Activated naive CD4-positive, alpha-beta T cell treated with anti-CD3 and anti-CD28 coated beads for 36 hours (primary cell): ENCODE measurements at regions of chr9 and their contacts with region 1.

Region 1: DNA sequence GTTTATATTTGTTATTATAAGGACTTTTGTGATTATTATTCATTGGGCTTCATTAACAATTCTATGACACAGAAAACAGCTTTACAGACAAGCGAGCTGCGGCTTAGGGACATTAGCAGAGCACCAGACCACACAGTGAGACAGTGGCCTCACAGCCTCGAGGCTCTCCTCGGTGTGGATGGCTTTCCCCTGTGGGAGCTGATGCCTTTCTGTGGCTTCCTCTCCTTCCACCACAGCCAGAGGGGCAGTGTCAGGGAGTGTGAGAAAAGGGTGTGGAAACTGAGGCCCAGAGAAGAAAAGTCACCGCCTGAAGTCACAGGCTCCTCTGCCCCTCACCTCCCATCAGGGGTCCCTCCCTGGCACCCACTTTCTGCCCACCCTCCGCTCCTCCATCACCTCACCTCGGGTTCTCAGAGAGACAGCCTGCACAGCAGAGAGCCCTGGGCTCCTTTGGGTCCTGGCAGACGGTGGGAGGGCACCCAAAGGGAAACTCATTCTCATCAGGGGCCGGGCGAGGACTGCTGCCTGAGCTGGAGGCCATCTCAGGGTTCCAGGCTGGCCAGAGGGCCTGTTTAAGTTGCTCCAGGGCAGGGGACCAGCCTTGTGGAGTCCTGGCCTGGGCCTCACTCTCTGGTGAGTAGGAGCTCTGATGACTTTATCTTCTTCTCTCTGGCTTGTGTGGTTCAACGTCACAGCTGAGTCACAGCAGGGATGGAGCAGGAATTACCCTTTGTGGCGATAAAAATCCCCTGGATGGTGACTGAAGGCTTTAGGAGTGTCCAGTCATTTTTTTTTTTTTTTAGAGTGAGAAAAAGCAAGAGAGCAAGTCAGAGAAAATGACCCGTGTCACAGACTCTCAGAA is 830 bp downstream of the TRAF1 start:
- DNase-seq: peak; percentile 97
- H3K4me3 Mint-ChIP-seq: peak overlapping the region; percentile 92
- H3K27ac Mint-ChIP-seq: peak overlapping the region; percentile 98
- H3K4me1 Mint-ChIP-seq: peaks cover 74% of the 10 kb centered on the region
- H3K27me3 Mint-ChIP-seq: no peaks in the 10 kb centered on the region

Region 2: DNA sequence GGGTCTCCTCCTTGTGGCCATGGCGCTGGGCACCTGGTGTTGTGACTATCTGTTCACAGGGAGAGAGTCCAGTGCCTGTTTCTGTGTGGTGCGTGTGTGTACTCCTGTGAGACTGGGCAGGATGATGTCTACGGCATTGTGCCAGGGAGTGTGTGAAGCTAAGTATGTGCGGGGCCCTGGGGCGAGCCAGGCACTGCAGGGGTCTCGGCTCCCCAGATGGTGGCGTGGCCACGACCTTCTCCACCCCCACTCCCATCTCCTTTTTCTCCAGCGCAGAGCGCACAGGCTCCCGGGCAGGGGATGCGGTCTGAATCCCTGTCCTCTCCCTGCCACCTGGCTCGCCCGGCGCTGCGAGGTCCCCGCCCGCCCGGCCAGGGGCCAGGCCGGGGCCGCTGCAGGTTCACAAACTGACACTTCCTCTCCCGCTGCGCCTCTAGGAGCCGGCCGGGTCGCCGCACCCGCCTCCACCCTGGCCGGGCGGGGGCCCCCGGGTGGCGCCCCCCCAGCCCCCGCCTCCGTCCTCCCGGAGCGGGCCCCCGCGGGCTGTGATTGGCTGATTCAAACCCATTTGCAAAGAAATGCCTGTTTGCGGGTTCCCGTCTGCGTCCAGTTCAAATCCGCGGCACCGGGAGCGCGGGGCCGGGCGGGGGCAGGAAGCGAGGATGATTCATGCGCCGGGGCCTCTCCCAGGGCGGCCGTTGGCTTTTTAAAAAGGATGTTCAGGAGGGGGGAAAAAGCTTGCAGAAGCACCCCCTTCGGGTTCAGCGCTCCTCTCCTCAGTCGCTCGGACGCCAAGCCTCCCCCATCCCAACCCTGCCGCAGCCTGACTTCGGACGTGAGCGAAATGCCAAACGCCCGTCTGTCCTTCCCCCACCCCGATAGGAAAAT is 49.6 kb before region 1 on chr9:
- CTCF ChIA-PET with region 1: interaction called, 3 read pairs
- intact Hi-C with region 1: loop called (anchors 1 kb)
- DNase-seq: peak; percentile 98
- H3K4me3 Mint-ChIP-seq: peak overlapping the region; percentile 85
- H3K27ac Mint-ChIP-seq: peak overlapping the region; percentile 98
- H3K4me1 Mint-ChIP-seq: peaks cover 75% of the 10 kb centered on the region
- H3K27me3 Mint-ChIP-seq: no peaks in the 10 kb centered on the region